Gastrocnemius medialis (tissue), 4 donors: ENCODE measurements at regions of chr3 and their contacts with region 1.

Region 1: GRCh38 chr3:158570999-158571974 is at the start of gene MLF1:
- DNase-seq: peak; percentile 96
- ATAC-seq: peak; percentile 91 to 94
- H3K4me3 ChIP-seq: peak within 1 kb of the TSS; percentile 74 to 94 (median 86)
- H3K27ac ChIP-seq: peak within 1 kb of the TSS; percentile 89 to 95 (median 93)
- H3K4me1 ChIP-seq: peaks cover 21 to 28% of the 10 kb centered on the region in 2 donors
- H3K27me3 ChIP-seq: no peaks in the 10 kb centered on the region
- CTCF ChIP-seq: no peak
- POLR2A ChIP-seq: peak; percentile 83 to 92
- total RNA-seq, gene MLF1: 18.4 to 40.8 (median 24.0) TPM

Region 2: GRCh38 chr3:157819270-157820156 is 751.8 kb before region 1 on chr3:
- in situ Hi-C with region 1: no loop called
- intact Hi-C with region 1: no loop called
- DNase-seq: no peak
- ATAC-seq: no peak
- H3K4me3 ChIP-seq: no peak overlapping the region
- H3K27ac ChIP-seq: no peak overlapping the region
- H3K4me1 ChIP-seq: no peaks in the 10 kb centered on the region
- H3K27me3 ChIP-seq: no peaks in the 10 kb centered on the region
- CTCF ChIP-seq: no peak
- POLR2A ChIP-seq: no peak

Region 3: GRCh38 chr3:158109804-158110657 is 461.3 kb before region 1 on chr3 and contains the start of gene RSRC1:
- in situ Hi-C with region 1: no loop called
- intact Hi-C with region 1: loop called (anchors 5 kb)
- DNase-seq: peak; percentile 78 to 80
- ATAC-seq: peak; percentile 93 to 94
- H3K4me3 ChIP-seq: peak within 1 kb of the TSS; percentile 80 to 97 (median 90)
- H3K27ac ChIP-seq: peak within 1 kb of the TSS; percentile 80 to 89 (median 86)
- H3K4me1 ChIP-seq: peaks cover 17 to 40% of the 10 kb centered on the region in 2 donors
- H3K27me3 ChIP-seq: peaks cover 40 to 42% (median 40%) of the 10 kb centered on the region in 3 donors
- CTCF ChIP-seq: peak in 1 of 5 experiments; percentile 7
- POLR2A ChIP-seq: peak; percentile 16 to 45
- total RNA-seq, gene RSRC1: 27.7 to 36.7 (median 31.9) TPM

Region 4: DNA sequence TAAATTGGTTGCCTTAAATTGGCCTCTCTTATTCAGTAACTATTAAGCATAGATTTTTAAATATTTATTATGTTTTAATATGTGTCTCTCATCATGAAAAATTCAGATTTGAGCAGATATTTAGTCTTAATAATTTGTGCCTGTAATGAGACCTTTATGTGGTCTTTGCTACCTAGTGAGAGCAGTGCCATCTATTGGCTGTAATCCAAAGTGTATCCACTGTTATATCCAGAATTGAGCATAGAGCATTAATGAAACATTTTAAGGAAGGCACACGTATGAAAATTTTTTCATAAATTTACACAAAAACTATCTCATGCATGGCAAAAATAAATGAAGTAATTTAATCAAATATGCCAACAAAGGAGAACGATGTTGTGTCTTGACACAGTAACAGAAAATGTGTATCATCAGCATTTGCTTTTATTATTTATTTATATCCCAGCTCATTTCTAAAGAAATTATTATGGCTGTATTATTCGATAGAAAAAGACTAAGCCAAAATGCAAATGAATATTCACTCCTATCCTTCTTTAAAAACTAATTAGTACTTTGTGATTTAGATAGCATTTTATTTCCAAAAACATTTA is 257.9 kb before region 1 on chr3:
- in situ Hi-C with region 1: no loop called
- intact Hi-C with region 1: no loop called
- DNase-seq: no peak
- ATAC-seq: no peak
- H3K4me3 ChIP-seq: no peak overlapping the region
- H3K27ac ChIP-seq: no peak overlapping the region
- H3K4me1 ChIP-seq: no peaks in the 10 kb centered on the region
- H3K27me3 ChIP-seq: no peaks in the 10 kb centered on the region
- CTCF ChIP-seq: no peak
- POLR2A ChIP-seq: no peak

Region 5: GRCh38 chr3:158539414-158540014 is 31.8 kb before region 1 on chr3:
- in situ Hi-C with region 1: no loop called
- intact Hi-C with region 1: loop called (anchors 2 kb)
- DNase-seq: no peak
- ATAC-seq: no peak
- H3K4me3 ChIP-seq: no peak overlapping the region
- H3K27ac ChIP-seq: no peak overlapping the region
- H3K4me1 ChIP-seq: no peaks in the 10 kb centered on the region
- H3K27me3 ChIP-seq: no peaks in the 10 kb centered on the region
- CTCF ChIP-seq: peak; percentile 21 to 56 (median 36)
- POLR2A ChIP-seq: no peak

Region 6: DNA sequence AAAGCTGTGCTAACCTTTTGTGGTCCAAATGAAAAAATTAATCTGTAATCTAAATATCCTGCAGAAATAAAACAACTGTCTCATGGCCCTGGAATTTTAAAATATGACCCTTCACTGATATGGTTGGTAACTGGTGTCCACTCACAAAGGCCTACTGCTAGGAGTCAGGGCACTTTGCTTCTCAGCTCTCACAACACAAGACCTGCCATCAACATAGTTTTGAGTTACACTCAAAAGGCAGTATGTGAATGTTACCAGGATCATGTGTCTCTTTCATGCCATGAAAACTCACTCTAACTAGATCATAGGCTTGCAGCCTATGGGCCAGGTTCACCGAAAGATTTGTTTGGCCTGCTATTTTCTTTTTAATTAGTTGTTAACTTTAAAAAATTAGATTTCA is 10.3 kb before region 1 on chr3:
- in situ Hi-C with region 1: no loop called
- intact Hi-C with region 1: no loop called
- DNase-seq: no peak
- ATAC-seq: peak; percentile 75 to 89
- H3K4me3 ChIP-seq: no peak overlapping the region
- H3K27ac ChIP-seq: peak overlapping the region in 3 of 4 donors; percentile 21 to 60 (median 50)
- H3K4me1 ChIP-seq: peaks cover 7 to 17% of the 10 kb centered on the region in 2 donors
- H3K27me3 ChIP-seq: no peaks in the 10 kb centered on the region
- CTCF ChIP-seq: no peak
- POLR2A ChIP-seq: no peak

Region 7: GRCh38 chr3:158644345-158644908 is 73.1 kb after region 1 on chr3 and contains the start of gene GFM1:
- in situ Hi-C with region 1: no loop called
- intact Hi-C with region 1: loop called (anchors 5 kb)
- DNase-seq: peak; percentile 91 to 96
- ATAC-seq: peak; percentile 100
- H3K4me3 ChIP-seq: peak within 1 kb of the TSS; percentile 75 to 91 (median 77)
- H3K27ac ChIP-seq: peak within 1 kb of the TSS; percentile 90 to 96 (median 94)
- H3K4me1 ChIP-seq: peaks cover 25 to 39% of the 10 kb centered on the region in 2 donors
- H3K27me3 ChIP-seq: no peaks in the 10 kb centered on the region
- CTCF ChIP-seq: peak; percentile 62 to 88 (median 66)
- POLR2A ChIP-seq: peak; percentile 76 to 84
- total RNA-seq, gene GFM1: 52.6 to 84.4 (median 76.2) TPM

Region 8: DNA sequence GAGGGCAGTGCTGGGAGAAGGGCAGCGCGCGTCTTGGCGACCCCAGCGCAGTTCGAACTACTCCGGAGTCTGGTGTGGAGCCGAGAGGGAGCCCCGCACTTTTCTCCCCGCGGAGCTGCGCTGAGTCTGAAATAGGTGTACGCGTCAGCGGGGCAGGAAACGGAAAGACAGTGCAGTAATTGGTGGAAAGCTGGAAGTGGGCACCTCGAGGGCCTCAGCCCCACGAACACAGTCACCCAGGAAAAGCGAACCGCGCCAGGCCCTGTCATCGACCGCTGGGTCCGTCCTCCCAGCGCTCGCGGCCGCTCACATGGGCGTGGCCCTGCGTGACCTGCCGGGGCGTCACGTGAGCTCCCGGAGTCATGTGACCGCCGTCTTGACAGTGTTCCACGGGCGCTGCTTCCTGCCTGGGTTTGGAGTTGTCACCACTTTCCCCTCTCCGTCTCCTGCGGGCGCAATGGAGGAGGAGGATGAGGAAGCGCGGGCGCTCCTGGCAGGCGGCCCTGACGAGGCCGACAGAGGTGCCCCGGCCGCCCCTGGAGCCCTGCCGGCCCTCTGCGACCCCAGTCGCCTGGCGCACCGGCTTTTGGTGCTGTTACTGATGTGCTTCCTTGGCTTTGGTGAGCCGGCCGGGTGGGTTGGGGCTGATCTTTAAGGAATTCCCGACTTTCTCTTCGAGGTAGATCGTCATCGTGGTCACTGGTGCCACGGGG is 230.6 kb after region 1 on chr3 and contains the start of gene MFSD1:
- in situ Hi-C with region 1: no loop called
- intact Hi-C with region 1: loop called (anchors 10 kb)
- DNase-seq: peak; percentile 90 to 94
- ATAC-seq: peak; percentile 98
- H3K4me3 ChIP-seq: peak within 1 kb of the TSS; percentile 68 to 99 (median 92)
- H3K27ac ChIP-seq: peak within 1 kb of the TSS; percentile 80 to 95 (median 86)
- H3K4me1 ChIP-seq: peaks cover 16 to 30% of the 10 kb centered on the region in 2 donors
- H3K27me3 ChIP-seq: no peaks in the 10 kb centered on the region
- CTCF ChIP-seq: no peak
- POLR2A ChIP-seq: peak; percentile 76 to 80
- total RNA-seq, gene MFSD1: 18.6 to 33.5 (median 25.2) TPM